ENCODE measurements at regions of chr7 and their contacts with region 1.

Region 1: GRCh38 chr7:19404912-19405329 is 259.7 kb upstream of the FERD3L start:
- DNase-seq: peak; percentile 93
- H3K4me3 Mint-ChIP-seq: peak overlapping the region; percentile 53
- H3K27ac Mint-ChIP-seq: peak overlapping the region; percentile 89
- H3K4me1 Mint-ChIP-seq: peaks cover 14% of the 10 kb centered on the region
- H3K27me3 Mint-ChIP-seq: no peaks in the 10 kb centered on the region
- CTCF ChIP-seq: no peak

Region 2: DNA sequence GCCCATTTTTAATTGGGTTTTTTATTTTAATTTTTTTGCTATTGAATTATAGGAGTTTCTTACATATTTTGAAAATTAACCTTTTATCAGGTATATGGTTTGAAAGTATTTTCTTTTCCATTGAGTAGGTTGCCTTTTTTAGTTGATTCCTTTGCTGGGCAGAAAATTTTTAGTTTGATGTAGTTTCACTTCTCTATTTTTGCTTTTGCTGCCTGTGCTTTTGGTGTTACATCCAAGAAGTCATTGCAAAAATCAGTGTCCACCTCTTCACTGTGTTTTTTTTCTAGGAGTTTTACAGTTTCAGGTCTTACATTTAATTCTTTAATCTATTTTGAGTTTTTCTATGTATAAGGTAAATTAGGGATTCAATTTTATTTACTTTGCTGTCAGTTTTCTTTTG is 129.9 kb before region 1 on chr7:
- CTCF ChIA-PET with region 1: no interaction called
- POLR2A ChIA-PET with region 1: no interaction called
- intact Hi-C with region 1: loop called (anchors 5 kb)
- DNase-seq: no peak
- H3K4me3 Mint-ChIP-seq: no peak overlapping the region
- H3K27ac Mint-ChIP-seq: no peak overlapping the region
- H3K4me1 Mint-ChIP-seq: no peaks in the 10 kb centered on the region
- H3K27me3 Mint-ChIP-seq: no peaks in the 10 kb centered on the region
- CTCF ChIP-seq: no peak

Region 3: DNA sequence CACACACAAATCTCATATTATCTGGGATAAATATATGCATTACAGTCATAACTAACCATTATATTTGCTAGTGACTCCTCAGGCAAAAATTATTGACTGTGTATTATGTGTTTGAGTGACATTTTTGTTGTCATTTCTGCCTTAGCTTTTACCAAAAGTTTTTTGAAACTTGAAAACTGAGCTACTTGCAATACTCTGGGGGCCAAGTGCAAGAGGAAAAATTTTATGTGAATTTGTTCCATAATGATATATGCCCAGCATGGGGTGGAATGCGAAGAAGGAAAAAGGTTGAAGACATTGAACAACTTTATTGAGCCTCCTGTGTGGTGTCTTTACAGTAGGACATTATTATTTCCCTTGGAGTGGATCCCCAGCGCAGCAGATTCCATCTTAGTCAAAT is 82.9 kb before region 1 on chr7:
- CTCF ChIA-PET with region 1: no interaction called
- POLR2A ChIA-PET with region 1: no interaction called
- intact Hi-C with region 1: no loop called
- DNase-seq: no peak
- H3K4me3 Mint-ChIP-seq: no peak overlapping the region
- H3K27ac Mint-ChIP-seq: no peak overlapping the region
- H3K4me1 Mint-ChIP-seq: peaks cover 19% of the 10 kb centered on the region
- H3K27me3 Mint-ChIP-seq: no peaks in the 10 kb centered on the region
- CTCF ChIP-seq: no peak

Region 4: GRCh38 chr7:19489162-19489820 is 84.4 kb after region 1 on chr7:
- CTCF ChIA-PET with region 1: no interaction called
- POLR2A ChIA-PET with region 1: no interaction called
- intact Hi-C with region 1: no loop called
- DNase-seq: no peak
- H3K4me3 Mint-ChIP-seq: no peak overlapping the region
- H3K27ac Mint-ChIP-seq: no peak overlapping the region
- H3K4me1 Mint-ChIP-seq: no peaks in the 10 kb centered on the region
- H3K27me3 Mint-ChIP-seq: no peaks in the 10 kb centered on the region
- CTCF ChIP-seq: no peak